Mammary epithelial cell (primary cell): ENCODE measurements at regions of chr15 and their contacts with region 1.

Region 1: GRCh38 chr15:74545880-74546656 is 5.0 kb downstream of the ARID3B start:
- DNase-seq: peak; percentile 99
- H3K4me3 ChIP-seq: no peak overlapping the region
- H3K27ac ChIP-seq: no peak overlapping the region
- H3K4me1 ChIP-seq: peaks cover 30% of the 10 kb centered on the region
- H3K27me3 ChIP-seq: no peaks in the 10 kb centered on the region
- CTCF ChIP-seq: peak in 1 of 2 donors; percentile 35

Region 2: GRCh38 chr15:74438721-74439316 is 107.2 kb before region 1 on chr15:
- CTCF ChIA-PET with region 1: no interaction called
- dilution Hi-C with region 1: no loop called
- in situ Hi-C with region 1: no loop called
- intact Hi-C with region 1: loop called (anchors 1 kb)
- DNase-seq: peak; percentile 73
- H3K4me3 ChIP-seq: no peak overlapping the region
- H3K27ac ChIP-seq: no peak overlapping the region
- H3K4me1 ChIP-seq: peaks cover 4% of the 10 kb centered on the region
- H3K27me3 ChIP-seq: no peaks in the 10 kb centered on the region
- CTCF ChIP-seq: peak; percentile 97 to 98

Region 3: DNA sequence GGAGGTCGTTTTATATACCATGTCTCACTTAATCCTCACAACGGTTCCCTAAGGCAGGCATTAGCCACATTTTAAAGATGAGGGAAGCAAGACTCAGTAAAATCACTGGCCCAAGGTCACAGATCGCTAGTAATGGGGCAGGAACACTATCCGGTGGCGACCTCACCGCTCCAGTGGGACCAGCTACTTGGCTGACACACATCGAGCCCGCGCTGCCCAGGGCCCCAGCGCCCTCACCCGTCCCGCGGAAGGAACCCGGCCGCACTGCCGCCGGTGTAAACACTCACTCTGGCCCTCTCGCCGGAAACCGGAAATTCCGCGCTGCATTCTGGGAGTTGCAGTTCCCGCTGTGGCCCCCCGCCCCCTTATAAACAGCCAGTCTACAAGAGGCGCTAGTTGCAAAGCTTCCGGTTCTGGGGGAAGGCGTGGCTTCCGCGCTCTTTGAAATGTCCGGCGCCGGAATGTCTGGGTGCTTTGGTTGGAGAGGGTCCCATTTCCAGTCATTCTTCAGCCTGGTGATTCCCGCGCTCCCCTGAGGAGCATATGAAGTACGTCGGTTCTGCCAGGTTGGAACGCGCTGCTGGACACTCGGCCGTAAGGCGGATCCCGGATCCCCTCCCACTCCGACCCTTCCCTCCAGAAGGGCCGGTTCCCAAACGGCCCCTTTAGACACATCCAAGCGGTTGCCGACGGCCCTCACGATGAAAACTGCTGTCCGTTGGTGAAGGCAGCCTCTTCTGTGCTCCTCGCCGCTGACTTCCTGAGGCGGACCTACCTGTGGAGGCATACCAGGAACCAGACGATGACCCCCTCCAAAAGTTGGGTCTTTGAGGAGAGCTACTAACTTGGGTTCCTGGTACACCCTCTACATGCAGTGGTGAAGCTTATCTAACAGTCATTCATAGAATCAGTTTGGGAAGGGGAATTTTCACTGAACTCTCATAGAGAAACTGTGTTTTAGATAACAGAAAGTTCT is 84.9 kb before region 1 on chr15 and contains the start of gene UBL7:
- CTCF ChIA-PET with region 1: interaction called, 10 read pairs
- dilution Hi-C with region 1: no loop called
- in situ Hi-C with region 1: loop called in 1 of 2 experiments (anchors 5 kb)
- intact Hi-C with region 1: loop called (anchors 1 kb)
- DNase-seq: peak; percentile 97
- H3K4me3 ChIP-seq: peak within 1 kb of the TSS; percentile 63 to 96 (median 94)
- H3K27ac ChIP-seq: peak within 1 kb of the TSS; percentile 82
- H3K4me1 ChIP-seq: peaks cover 13% of the 10 kb centered on the region
- H3K27me3 ChIP-seq: no peaks in the 10 kb centered on the region
- CTCF ChIP-seq: peak in 1 of 2 donors; percentile 39
- total RNA-seq, gene UBL7: 36.4 to 41.7 TPM

Region 4: DNA sequence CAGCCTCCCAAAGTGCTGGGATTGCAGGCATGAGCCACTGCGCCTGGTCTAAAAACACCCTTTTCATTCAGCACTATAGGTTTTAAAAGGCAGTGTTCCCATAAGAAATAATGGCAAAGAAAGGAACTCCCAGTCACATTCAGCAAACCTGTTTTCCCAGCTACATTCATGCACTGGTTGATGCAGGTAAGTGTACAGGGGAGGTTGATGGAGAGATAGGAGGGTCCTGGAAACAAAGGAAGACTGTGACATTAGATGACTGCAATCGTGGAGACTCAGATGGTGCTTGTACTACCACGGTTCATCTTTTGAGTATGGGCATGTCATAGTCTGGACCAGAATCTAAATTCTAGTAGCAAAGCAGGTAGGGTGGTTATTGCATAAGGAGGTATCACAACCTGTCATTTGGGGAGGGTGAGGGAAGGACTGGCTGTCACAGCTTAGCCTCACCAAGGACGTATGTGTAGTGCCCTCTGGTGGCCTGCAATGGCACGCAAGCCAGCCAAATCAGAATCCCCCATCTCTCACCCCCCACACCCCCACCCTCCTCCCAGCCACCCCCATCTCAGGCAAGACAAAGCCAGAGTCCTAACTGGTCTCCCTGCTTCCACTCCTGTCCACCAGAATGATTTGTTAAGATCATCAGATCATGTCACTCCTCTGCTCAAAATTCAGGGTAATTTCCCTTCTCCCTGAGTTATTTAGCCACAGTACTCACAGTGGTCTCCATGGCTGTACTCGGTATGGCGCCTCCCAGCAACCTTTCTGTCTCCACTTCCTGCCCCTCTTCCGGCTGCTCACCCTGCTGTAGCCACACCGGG is 56.3 kb before region 1 on chr15:
- CTCF ChIA-PET with region 1: interaction called, 3 read pairs
- dilution Hi-C with region 1: no loop called
- in situ Hi-C with region 1: no loop called
- intact Hi-C with region 1: loop called (anchors 2 kb)
- DNase-seq: peak; percentile 20
- H3K4me3 ChIP-seq: no peak overlapping the region
- H3K27ac ChIP-seq: no peak overlapping the region
- H3K4me1 ChIP-seq: no peaks in the 10 kb centered on the region
- H3K27me3 ChIP-seq: no peaks in the 10 kb centered on the region
- CTCF ChIP-seq: peak; percentile 50 to 72

Region 5: DNA sequence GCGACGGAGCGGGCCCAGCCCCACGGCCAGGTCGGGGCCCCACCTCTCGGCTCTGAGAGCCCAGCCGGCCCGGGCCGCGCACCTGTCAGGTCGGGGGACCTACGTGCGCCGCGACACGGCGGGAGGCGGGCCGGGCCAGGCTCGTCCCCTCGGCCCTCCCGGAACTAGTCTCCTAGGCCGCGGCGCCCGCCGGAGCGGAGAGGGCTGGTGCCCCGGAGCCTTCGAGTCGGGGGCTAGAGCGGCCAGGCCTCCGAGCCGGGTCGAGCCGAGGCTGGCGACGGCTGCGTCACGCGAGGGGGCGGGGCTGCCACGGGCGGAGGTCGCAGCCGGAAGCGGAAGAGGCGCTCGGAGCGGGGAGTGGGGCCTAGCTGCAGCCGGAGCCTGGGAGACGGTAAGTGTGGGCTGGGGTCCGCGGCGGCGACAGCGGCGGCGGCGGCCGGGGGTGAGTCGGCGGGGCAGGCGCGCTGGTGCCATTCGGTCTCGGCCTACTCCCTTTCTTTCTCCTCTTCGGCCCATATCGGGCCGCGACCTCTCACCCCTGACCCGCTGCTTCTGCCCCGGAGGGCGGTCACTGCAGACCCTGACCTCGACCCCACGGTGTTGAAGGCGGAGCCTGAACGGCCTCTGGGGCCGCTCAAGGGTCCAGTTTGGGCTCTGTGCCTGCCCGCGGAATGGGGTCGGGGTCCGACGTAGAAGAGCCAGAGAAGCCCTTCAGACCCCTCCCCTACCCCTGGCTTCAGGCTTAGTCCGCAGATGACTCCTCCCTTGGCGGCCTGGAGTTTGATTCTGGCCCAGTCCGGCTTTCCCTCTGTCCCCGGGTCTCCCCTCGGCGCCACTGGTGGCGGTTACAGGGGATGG is 69.7 kb after region 1 on chr15 and contains the start of gene CLK3:
- CTCF ChIA-PET with region 1: interaction called, 24 read pairs
- dilution Hi-C with region 1: no loop called
- in situ Hi-C with region 1: loop called in 1 of 2 experiments (anchors 5 kb)
- intact Hi-C with region 1: loop called (anchors 1 kb)
- DNase-seq: peak; percentile 95
- H3K4me3 ChIP-seq: peak within 1 kb of the TSS; percentile 89 to 93 (median 91)
- H3K27ac ChIP-seq: peak within 1 kb of the TSS; percentile 86
- H3K4me1 ChIP-seq: peaks cover 36% of the 10 kb centered on the region
- H3K27me3 ChIP-seq: no peaks in the 10 kb centered on the region
- CTCF ChIP-seq: no peak
- total RNA-seq, gene CLK3: 52.7 to 58.7 TPM

Region 6: DNA sequence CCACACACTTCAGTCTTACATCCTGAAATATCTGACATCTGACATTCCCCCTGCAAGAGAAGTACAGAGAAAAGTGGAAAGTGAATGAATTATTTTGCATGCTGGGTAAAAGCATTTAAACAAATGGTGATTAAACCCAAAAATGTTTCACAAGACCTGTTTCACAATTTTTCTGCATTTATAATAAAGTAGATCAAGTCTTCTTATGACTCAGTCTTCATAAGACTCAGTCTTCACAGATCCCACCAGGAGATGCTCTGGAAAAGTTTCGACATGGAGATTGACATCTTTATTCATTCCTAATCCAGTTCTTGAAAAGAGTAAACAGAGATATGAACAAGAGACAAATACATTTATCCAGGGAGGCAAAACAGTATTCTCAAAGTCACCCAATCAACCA is 162.9 kb after region 1 on chr15:
- CTCF ChIA-PET with region 1: no interaction called
- dilution Hi-C with region 1: no loop called
- in situ Hi-C with region 1: no loop called
- intact Hi-C with region 1: no loop called
- DNase-seq: no peak
- H3K4me3 ChIP-seq: no peak overlapping the region
- H3K27ac ChIP-seq: no peak overlapping the region
- H3K4me1 ChIP-seq: no peaks in the 10 kb centered on the region
- H3K27me3 ChIP-seq: no peaks in the 10 kb centered on the region
- CTCF ChIP-seq: no peak

Region 7: DNA sequence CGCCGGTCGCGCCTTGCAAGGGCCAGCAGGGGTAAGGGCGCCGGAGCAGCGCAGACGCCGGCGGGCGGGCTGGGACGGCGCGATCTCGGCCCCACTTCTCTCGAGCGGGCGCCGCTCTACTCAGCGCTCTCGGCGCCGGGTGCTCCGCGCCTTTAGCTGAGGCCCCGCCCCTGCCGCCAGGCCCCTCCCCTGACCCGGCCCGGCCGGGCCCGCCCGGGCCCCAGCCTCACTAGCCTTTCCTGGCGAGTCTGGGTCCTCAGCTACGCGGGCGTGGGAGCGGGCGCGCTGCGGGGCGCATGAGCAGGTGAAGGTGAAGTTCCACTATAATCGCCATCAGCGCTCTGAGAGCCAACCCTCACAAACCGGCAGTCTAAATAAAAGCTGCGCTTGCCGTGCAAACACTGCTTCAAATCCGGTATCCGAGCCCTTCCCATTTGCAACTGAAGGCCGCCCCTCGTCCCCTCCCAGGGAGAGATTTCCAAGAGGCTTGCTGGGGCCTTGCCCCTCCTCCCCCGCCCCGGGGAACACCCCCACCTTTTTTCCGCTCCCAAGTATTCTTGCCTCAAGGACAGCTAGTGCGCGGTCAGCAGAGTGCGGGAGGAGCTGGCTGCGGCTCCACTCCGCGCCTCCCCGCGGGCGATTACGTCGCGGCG is 410.7 kb after region 1 on chr15 and contains the start of gene RPP25:
- CTCF ChIA-PET with region 1: no interaction called
- dilution Hi-C with region 1: no loop called
- in situ Hi-C with region 1: no loop called
- intact Hi-C with region 1: no loop called
- DNase-seq: peak; percentile 58
- H3K4me3 ChIP-seq: peak within 1 kb of the TSS; percentile 22 to 49 (median 45)
- H3K27ac ChIP-seq: no peak within 1 kb of the TSS
- H3K4me1 ChIP-seq: peaks cover 20% of the 10 kb centered on the region
- H3K27me3 ChIP-seq: peaks cover 15% of the 10 kb centered on the region
- CTCF ChIP-seq: no peak
- total RNA-seq, gene RPP25: 0.28 to 1.2 TPM